H1 (cell line): ENCODE measurements at regions of chr11 and their contacts with region 1.

Region 1: GRCh38 chr11:96342961-96343711 is at the start of gene MAML2:
- DNase-seq: peak; percentile 81 to 84
- H3K4me3 ChIP-seq: peak within 1 kb of the TSS; percentile 48 to 95 (median 70)
- H3K27ac ChIP-seq: no peak within 1 kb of the TSS
- H3K4me1 ChIP-seq: peaks cover 0 to 19% (median 6%) of the 10 kb centered on the region in 4 experiments; a peak in 6 of 7 replicates
- H3K27me3 ChIP-seq: peaks cover 0 to 3% (median 0%) of the 10 kb centered on the region in 4 experiments; a peak in 1 of 7 replicates
- CTCF ChIP-seq: peak; percentile 89 to 98 (median 95)
- EP300 ChIP-seq: peak in 1 of 2 experiments; percentile 5; a peak in 1 of 3 replicates
- POLR2A ChIP-seq: no peak
- RAD21 ChIP-seq: peak; percentile 87 to 93
- total RNA-seq, gene MAML2: 6.6 and 6.8 TPM in 2 replicates

Region 2: DNA sequence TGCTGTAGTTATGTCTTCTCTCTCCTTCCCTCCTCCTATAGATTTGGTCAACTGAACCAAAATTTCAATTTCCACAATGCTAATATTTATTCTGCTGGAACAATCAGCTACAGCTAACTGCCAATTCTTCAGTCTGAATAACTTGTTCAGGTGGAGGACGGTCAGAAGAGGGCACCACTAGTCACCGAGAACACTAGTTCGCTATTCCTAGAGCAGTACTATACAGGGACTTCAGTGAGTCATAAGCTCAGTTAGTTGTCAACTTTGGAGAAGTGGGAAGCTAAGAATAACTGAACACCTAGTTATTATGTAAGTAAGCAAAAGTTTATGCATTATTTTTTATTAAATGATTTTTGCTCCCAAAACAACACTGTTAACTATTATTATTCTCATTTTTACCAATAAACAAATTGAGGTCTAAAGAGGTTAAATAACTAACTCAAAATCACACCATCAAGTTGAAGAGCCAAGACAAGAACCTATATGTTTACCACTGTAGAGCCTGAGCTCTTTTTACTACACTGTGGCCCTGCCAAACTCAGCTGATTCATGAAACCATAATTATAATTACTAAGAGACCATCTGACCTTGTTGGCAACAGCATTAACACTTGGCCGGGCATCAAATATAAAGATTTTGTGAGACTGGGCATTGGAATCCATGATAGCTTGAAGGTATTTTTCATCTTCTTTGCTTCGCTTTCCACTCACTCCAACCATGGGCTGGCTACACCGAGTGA is 493.9 kb before region 1 on chr11:
- CTCF ChIA-PET with region 1: interaction called, 11 read pairs
- POLR2A ChIA-PET with region 1: no interaction called
- DNase-seq: peak; percentile 7 to 48
- H3K4me3 ChIP-seq: no peak overlapping the region
- H3K27ac ChIP-seq: no peak overlapping the region
- H3K4me1 ChIP-seq: no peaks in the 10 kb centered on the region
- H3K27me3 ChIP-seq: no peaks in the 10 kb centered on the region
- CTCF ChIP-seq: peak; percentile 10 to 59 (median 59)
- EP300 ChIP-seq: no peak
- POLR2A ChIP-seq: no peak
- RAD21 ChIP-seq: peak; percentile 70 to 80

Region 3: GRCh38 chr11:96054870-96055705 is 288.0 kb before region 1 on chr11:
- CTCF ChIA-PET with region 1: interaction called, 49 read pairs
- POLR2A ChIA-PET with region 1: interaction called, 4 read pairs
- DNase-seq: no peak
- H3K4me3 ChIP-seq: peak overlapping the region in 1 of 4 experiments; percentile 3; a peak in 1 of 8 replicates
- H3K27ac ChIP-seq: no peak overlapping the region
- H3K4me1 ChIP-seq: peaks cover 5 to 6% (median 6%) of the 10 kb centered on the region in 4 experiments; a peak in 5 of 7 replicates
- H3K27me3 ChIP-seq: no peaks in the 10 kb centered on the region
- CTCF ChIP-seq: peak in 2 of 3 experiments; percentile 24 to 48; a peak in 2 of 4 replicates
- EP300 ChIP-seq: no peak
- POLR2A ChIP-seq: no peak
- RAD21 ChIP-seq: peak; percentile 67 to 69

Region 4: GRCh38 chr11:96228473-96228891 is 114.7 kb before region 1 on chr11:
- CTCF ChIA-PET with region 1: interaction called, 10 read pairs
- POLR2A ChIA-PET with region 1: no interaction called
- DNase-seq: no peak
- H3K4me3 ChIP-seq: no peak overlapping the region
- H3K27ac ChIP-seq: no peak overlapping the region
- H3K4me1 ChIP-seq: no peaks in the 10 kb centered on the region
- H3K27me3 ChIP-seq: no peaks in the 10 kb centered on the region
- CTCF ChIP-seq: no peak
- EP300 ChIP-seq: no peak
- POLR2A ChIP-seq: no peak
- RAD21 ChIP-seq: no peak

Region 5: DNA sequence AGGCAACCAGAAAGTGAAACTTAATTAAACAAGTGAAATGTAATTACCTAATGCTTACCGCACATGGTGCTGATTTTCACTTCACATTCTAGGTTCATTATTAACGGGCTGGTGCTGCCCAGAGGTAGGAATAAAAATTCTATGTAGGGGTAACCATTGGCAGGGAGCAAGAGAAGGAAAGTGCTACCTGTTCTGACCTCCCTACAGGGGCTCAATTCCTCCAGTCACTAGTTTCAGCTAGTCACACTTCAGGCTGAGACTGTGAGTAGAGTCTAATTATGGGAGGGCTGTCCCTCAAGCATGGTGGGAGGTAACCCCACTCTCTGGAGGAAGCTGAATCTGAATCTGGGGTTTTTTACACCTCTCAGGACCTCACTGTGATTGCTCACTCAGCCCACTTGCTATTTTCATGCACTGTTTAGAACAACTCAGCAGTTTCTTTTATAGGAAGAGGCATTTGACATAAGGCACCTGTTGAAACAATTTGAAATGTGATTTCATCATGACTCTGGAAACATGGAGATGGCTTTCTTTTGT is 75.6 kb before region 1 on chr11:
- CTCF ChIA-PET with region 1: interaction called, 12 read pairs
- POLR2A ChIA-PET with region 1: no interaction called
- DNase-seq: no peak
- H3K4me3 ChIP-seq: no peak overlapping the region
- H3K27ac ChIP-seq: no peak overlapping the region
- H3K4me1 ChIP-seq: peaks cover 0 to 5% (median 1%) of the 10 kb centered on the region in 4 experiments; a peak in 3 of 7 replicates
- H3K27me3 ChIP-seq: no peaks in the 10 kb centered on the region
- CTCF ChIP-seq: no peak
- EP300 ChIP-seq: no peak
- POLR2A ChIP-seq: no peak
- RAD21 ChIP-seq: no peak

Region 6: GRCh38 chr11:96331699-96332116 is 11.4 kb before region 1 on chr11:
- CTCF ChIA-PET with region 1: interaction called, 33 read pairs
- POLR2A ChIA-PET with region 1: interaction called, 13 read pairs
- DNase-seq: no peak
- H3K4me3 ChIP-seq: no peak overlapping the region
- H3K27ac ChIP-seq: no peak overlapping the region
- H3K4me1 ChIP-seq: peaks cover 3 to 22% (median 18%) of the 10 kb centered on the region in 4 experiments; a peak in 5 of 7 replicates
- H3K27me3 ChIP-seq: no peaks in the 10 kb centered on the region
- CTCF ChIP-seq: no peak
- EP300 ChIP-seq: no peak
- POLR2A ChIP-seq: no peak
- RAD21 ChIP-seq: no peak